ENCODE measurements at regions of chr22 and their contacts with region 1.

Region 1: GRCh38 chr22:22884010-22884887 is 3.4 kb upstream of the IGLL5 start:
- H3K4me3 Mint-ChIP-seq: no peak overlapping the region
- H3K27ac Mint-ChIP-seq: peak overlapping the region; percentile 67
- H3K4me1 Mint-ChIP-seq: peaks cover 42% of the 10 kb centered on the region
- H3K27me3 Mint-ChIP-seq: peaks cover 4% of the 10 kb centered on the region

Region 2: GRCh38 chr22:22446517-22446916 is 437.7 kb before region 1 on chr22:
- intact Hi-C with region 1: no loop called
- H3K4me3 Mint-ChIP-seq: no peak overlapping the region
- H3K27ac Mint-ChIP-seq: no peak overlapping the region
- H3K4me1 Mint-ChIP-seq: peaks cover 18% of the 10 kb centered on the region
- H3K27me3 Mint-ChIP-seq: peaks cover 47% of the 10 kb centered on the region

Region 3: GRCh38 chr22:22848364-22848866 is 35.8 kb before region 1 on chr22:
- intact Hi-C with region 1: loop called (anchors 5 kb)
- H3K4me3 Mint-ChIP-seq: no peak overlapping the region
- H3K27ac Mint-ChIP-seq: no peak overlapping the region
- H3K4me1 Mint-ChIP-seq: peaks cover 7% of the 10 kb centered on the region
- H3K27me3 Mint-ChIP-seq: peaks cover under 1% of the 10 kb centered on the region

Region 4: DNA sequence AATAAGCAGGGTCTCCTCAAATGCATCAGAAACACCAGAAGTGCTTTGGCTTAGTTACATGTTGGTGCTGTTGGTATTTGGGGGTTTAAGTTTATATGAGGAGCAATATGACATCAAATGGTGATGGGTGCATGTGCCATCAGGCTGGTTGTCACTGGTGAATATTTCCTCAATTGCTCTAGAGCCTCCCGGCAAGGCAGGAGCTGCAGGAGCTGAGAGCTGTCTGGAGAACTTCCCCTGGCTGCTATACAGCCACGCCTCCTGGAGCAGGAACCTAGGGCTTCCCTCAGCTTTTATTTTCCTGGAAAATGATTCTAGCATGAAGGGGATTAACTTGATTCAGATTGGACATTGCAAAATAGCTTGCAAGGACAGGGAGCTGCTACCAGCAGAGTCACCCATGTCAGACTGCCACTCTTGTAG is 19.1 kb after region 1 on chr22:
- intact Hi-C with region 1: no loop called
- H3K4me3 Mint-ChIP-seq: no peak overlapping the region
- H3K27ac Mint-ChIP-seq: peak overlapping the region; percentile 39
- H3K4me1 Mint-ChIP-seq: peaks cover 32% of the 10 kb centered on the region
- H3K27me3 Mint-ChIP-seq: peaks cover 16% of the 10 kb centered on the region

Region 5: GRCh38 chr22:23437779-23438178 is 553.5 kb after region 1 on chr22:
- intact Hi-C with region 1: no loop called
- H3K4me3 Mint-ChIP-seq: no peak overlapping the region
- H3K27ac Mint-ChIP-seq: no peak overlapping the region
- H3K4me1 Mint-ChIP-seq: peaks cover 14% of the 10 kb centered on the region
- H3K27me3 Mint-ChIP-seq: peaks cover 3% of the 10 kb centered on the region

Measured in dendritic cell treated with granulocyte-macrophage colony-stimulating factor and Interleukin-4, amounts not matched to agents 40 ng/mL and 50 ng/mL, for 4 days (primary cell).